CD4-positive, alpha-beta memory T cell (primary cell): ENCODE measurements at regions of chr1 and their contacts with region 1.

Region 1: GRCh38 chr1:226109829-226110248 is 47.3 kb downstream of the H3-3A start:
- DNase-seq: peak; percentile 54 to 79 (median 70)
- H3K4me3 ChIP-seq: peak overlapping the region; percentile 11 to 54
- H3K4me3 Mint-ChIP-seq: peak overlapping the region; percentile 90 to 94 (median 92)
- H3K27ac ChIP-seq: peak overlapping the region; percentile 59
- H3K27ac Mint-ChIP-seq: peak overlapping the region; percentile 76 to 94 (median 88)
- H3K4me1 ChIP-seq: peaks cover 13% of the 10 kb centered on the region
- H3K4me1 Mint-ChIP-seq: peaks cover 5 to 21% (median 11%) of the 10 kb centered on the region in 4 donors
- H3K27me3 ChIP-seq: no peaks in the 10 kb centered on the region
- H3K27me3 Mint-ChIP-seq: no peaks in the 10 kb centered on the region

Region 2: DNA sequence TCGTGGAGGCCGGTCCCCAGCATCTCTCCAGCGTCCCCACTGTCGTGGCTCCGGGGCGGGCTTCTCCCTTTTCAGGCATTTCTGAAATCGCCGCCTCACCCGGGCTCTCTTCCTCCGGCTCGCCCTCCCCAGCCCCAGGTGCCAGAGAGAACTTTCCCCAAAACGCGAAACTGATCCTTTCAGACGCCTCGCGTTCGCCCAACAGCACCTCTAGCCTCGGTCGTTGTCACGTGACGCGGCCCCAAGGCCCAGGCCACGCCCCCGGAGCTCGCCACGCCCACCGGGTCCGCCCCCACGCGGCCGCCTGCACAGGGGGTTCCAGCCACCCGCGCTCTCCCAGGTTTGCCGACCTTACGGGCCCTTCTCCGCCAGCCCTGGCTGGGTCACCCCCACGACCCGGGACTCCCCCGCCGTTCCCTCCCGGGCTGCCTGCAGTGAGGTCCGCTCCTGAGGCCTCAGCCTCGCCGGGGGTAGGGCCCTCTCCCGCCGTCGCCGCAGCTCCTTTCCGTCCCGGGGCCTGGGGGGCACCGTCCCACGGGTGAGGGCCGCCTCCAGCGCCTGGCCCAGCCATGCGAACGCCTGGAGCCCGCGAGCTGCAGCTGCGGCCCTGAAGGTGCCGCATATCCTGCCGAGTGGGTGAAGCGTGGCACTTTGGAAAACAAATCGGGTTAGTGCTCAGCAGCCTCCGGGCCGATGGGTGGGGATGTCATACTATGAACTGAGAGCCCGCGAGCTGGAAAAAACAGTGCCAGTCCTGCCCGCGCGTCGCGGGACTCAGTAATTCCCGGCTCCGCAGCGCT is 26.3 kb before region 1 on chr1:
- CTCF ChIA-PET with region 1: interaction called, 6 read pairs
- POLR2A ChIA-PET with region 1: interaction called, 11 read pairs
- intact Hi-C with region 1: loop called (anchors 2 kb)
- DNase-seq: peak; percentile 84 to 92 (median 89)
- H3K4me3 ChIP-seq: peak overlapping the region; percentile 36 to 69
- H3K4me3 Mint-ChIP-seq: peak overlapping the region; percentile 85 to 98 (median 90)
- H3K27ac ChIP-seq: peak overlapping the region; percentile 48
- H3K27ac Mint-ChIP-seq: peak overlapping the region in 6 of 7 donors; percentile 28 to 87 (median 78)
- H3K4me1 ChIP-seq: peaks cover 14% of the 10 kb centered on the region
- H3K4me1 Mint-ChIP-seq: peaks cover 4 to 11% (median 7%) of the 10 kb centered on the region in 4 donors
- H3K27me3 ChIP-seq: no peaks in the 10 kb centered on the region
- H3K27me3 Mint-ChIP-seq: no peaks in the 10 kb centered on the region

Region 3: GRCh38 chr1:226563666-226564065 is 453.8 kb after region 1 on chr1:
- CTCF ChIA-PET with region 1: no interaction called
- POLR2A ChIA-PET with region 1: no interaction called
- intact Hi-C with region 1: loop called (anchors 5 kb)
- DNase-seq: no peak
- H3K4me3 ChIP-seq: no peak overlapping the region
- H3K4me3 Mint-ChIP-seq: no peak overlapping the region
- H3K27ac ChIP-seq: no peak overlapping the region
- H3K27ac Mint-ChIP-seq: no peak overlapping the region
- H3K4me1 ChIP-seq: no peaks in the 10 kb centered on the region
- H3K4me1 Mint-ChIP-seq: no peaks in the 10 kb centered on the region
- H3K27me3 ChIP-seq: no peaks in the 10 kb centered on the region
- H3K27me3 Mint-ChIP-seq: peaks cover 10 to 13% of the 10 kb centered on the region in 2 donors